BJ (cell line): ENCODE measurements at regions of chr12 and their contacts with region 1.

Region 1: DNA sequence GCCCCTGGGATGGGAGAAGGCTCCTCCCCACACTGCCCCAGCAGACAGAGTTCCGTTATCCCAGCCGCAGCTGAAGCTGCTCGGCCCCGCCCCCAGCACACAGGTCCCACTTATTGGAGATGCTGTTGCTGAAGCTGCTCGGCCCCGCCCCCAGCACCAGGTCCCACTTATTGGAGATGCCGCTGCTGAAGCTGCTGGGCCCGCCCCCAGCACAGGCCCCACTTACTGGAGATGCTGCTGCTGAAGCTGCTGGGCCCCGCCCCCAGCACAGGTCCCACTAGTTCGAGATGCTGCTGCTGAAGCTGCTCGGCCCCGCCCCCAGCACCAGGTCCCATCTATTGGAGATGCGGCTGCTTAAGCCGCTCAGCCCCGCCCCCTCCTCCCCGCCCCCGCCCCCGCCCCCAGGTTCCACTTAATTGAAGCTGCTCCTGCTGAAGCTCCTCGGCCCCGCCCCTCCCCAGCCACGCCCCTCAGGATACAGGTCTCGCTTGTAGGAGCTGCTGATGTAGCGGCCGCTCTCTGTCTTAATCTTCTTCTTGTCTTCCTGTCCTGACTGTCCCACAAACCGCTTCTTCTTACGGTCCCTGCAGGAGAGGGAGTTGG is 12.0 kb downstream of the CFAP73 start:
- DNase-seq: no peak
- H3K4me3 ChIP-seq: no peak overlapping the region
- H3K27me3 ChIP-seq: no peaks in the 10 kb centered on the region
- CTCF ChIP-seq: no peak

Region 2: GRCh38 chr12:113345318-113345717 is 183.8 kb after region 1 on chr12:
- CTCF ChIA-PET with region 1: no interaction called
- POLR2A ChIA-PET with region 1: interaction called, 10 read pairs
- DNase-seq: no peak
- H3K4me3 ChIP-seq: no peak overlapping the region
- H3K27me3 ChIP-seq: peaks cover 5% of the 10 kb centered on the region; the same call in 1 of the 2 replicates
- CTCF ChIP-seq: no peak

Region 3: DNA sequence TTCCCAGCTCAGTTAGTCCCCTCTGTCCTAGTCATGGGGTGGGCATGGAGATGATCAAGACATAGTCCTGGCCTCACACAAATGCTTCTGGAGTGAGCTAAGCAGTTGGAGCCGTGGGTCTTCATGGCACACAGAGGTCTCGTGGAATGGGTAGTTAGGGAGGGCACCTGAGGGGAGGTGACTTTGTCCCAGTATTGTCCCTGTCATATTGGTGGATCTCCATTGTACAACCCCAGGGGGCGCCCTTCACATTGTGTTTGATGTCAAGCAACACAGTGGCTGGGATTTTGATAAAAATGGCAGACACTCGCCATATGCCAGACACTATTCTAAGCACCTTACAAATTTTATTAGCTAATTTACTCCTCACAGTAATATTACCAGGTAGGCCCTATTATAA is 485.5 kb after region 1 on chr12:
- CTCF ChIA-PET with region 1: no interaction called
- POLR2A ChIA-PET with region 1: no interaction called
- DNase-seq: no peak
- H3K4me3 ChIP-seq: no peak overlapping the region
- H3K27me3 ChIP-seq: 0 out of 2 replicates have a peak, but pooled peaks cover 2% of the 10 kb centered on the region
- CTCF ChIP-seq: no peak